Natural killer cell (primary cell): ENCODE measurements at regions of chr1 and their contacts with region 1.

Region 1: GRCh38 chr1:154479764-154480421 is 22.1 kb upstream of the TDRD10 start:
- DNase-seq: peak; percentile 21 to 86
- ATAC-seq: peak; percentile 83 to 95 (median 92)
- H3K4me3 ChIP-seq: no peak overlapping the region
- H3K4me3 Mint-ChIP-seq: no peak overlapping the region
- H3K27ac ChIP-seq: no peak overlapping the region
- H3K27ac Mint-ChIP-seq: no peak overlapping the region
- H3K4me1 ChIP-seq: no peaks in the 10 kb centered on the region
- H3K4me1 Mint-ChIP-seq: peaks cover 0 to 5% of the 10 kb centered on the region in 2 donors
- H3K27me3 ChIP-seq: no peaks in the 10 kb centered on the region
- H3K27me3 Mint-ChIP-seq: no peaks in the 10 kb centered on the region
- CTCF ChIP-seq: peak; percentile 91

Region 2: DNA sequence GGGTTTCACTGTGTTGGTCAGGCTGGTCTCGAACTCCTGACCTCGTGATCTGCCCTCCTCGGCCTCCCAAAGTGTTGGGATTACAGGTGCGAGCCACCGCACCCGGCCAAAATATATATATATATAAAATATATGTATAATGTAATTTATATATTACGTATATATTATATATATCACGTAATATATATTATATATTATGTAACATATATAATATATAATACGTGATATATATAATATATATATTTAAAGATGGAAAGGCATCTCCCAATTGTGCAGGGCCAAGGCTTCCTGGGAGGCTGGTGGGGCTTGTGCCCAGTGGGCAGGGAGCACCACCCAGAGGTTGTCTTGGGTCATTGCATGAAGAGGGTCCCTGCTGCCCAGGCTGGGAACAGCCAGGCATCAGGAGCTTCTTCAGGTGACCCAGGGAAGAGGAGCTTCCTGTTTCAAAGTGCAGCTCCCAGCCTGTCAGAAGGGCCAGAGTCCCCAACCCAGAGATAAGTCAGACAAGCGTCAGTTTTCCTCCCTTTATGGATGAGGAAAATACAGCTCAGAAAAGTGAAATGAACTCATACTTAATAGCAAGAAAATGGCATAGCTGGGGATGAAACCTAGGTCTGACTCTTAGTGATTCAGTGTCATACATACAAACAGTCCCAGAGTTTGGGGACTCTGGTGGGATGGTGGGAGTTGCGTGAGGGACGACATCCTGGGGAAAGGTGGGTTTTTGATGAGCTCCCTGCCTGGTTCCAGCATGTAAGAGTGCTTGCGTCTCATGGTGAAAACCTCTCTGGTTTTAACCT is 66.6 kb after region 1 on chr1:
- intact Hi-C with region 1: loop called (anchors 1 kb)
- DNase-seq: peak; percentile 31 to 76
- ATAC-seq: peak; percentile 73 to 94 (median 92)
- H3K4me3 ChIP-seq: no peak overlapping the region
- H3K4me3 Mint-ChIP-seq: no peak overlapping the region
- H3K27ac ChIP-seq: no peak overlapping the region
- H3K27ac Mint-ChIP-seq: peak overlapping the region in 1 of 2 donors; percentile 43
- H3K4me1 ChIP-seq: no peaks in the 10 kb centered on the region
- H3K4me1 Mint-ChIP-seq: peaks cover 6 to 25% of the 10 kb centered on the region in 2 donors
- H3K27me3 ChIP-seq: no peaks in the 10 kb centered on the region
- H3K27me3 Mint-ChIP-seq: peaks cover 0 to 2% of the 10 kb centered on the region in 2 donors
- CTCF ChIP-seq: peak; percentile 71

Region 3: GRCh38 chr1:154614901-154615300 is 135.0 kb after region 1 on chr1:
- intact Hi-C with region 1: no loop called
- DNase-seq: no peak
- ATAC-seq: no peak
- H3K4me3 ChIP-seq: no peak overlapping the region
- H3K4me3 Mint-ChIP-seq: no peak overlapping the region
- H3K27ac ChIP-seq: no peak overlapping the region
- H3K27ac Mint-ChIP-seq: no peak overlapping the region
- H3K4me1 ChIP-seq: no peaks in the 10 kb centered on the region
- H3K4me1 Mint-ChIP-seq: peaks cover 6 to 12% of the 10 kb centered on the region in 2 donors
- H3K27me3 ChIP-seq: no peaks in the 10 kb centered on the region
- H3K27me3 Mint-ChIP-seq: no peaks in the 10 kb centered on the region
- CTCF ChIP-seq: no peak

Region 4: GRCh38 chr1:154878371-154879022 is 398.6 kb after region 1 on chr1:
- intact Hi-C with region 1: loop called (anchors 1 kb)
- DNase-seq: peak; percentile 65 to 82
- ATAC-seq: peak; percentile 80 to 96 (median 96)
- H3K4me3 ChIP-seq: no peak overlapping the region
- H3K4me3 Mint-ChIP-seq: no peak overlapping the region
- H3K27ac ChIP-seq: no peak overlapping the region
- H3K27ac Mint-ChIP-seq: no peak overlapping the region
- H3K4me1 ChIP-seq: no peaks in the 10 kb centered on the region
- H3K4me1 Mint-ChIP-seq: no peaks in the 10 kb centered on the region
- H3K27me3 ChIP-seq: no peaks in the 10 kb centered on the region
- H3K27me3 Mint-ChIP-seq: peaks cover 3 to 18% of the 10 kb centered on the region in 2 donors
- CTCF ChIP-seq: peak; percentile 80